ENCODE measurements at regions of chr14 and their contacts with region 1.

Region 1: DNA sequence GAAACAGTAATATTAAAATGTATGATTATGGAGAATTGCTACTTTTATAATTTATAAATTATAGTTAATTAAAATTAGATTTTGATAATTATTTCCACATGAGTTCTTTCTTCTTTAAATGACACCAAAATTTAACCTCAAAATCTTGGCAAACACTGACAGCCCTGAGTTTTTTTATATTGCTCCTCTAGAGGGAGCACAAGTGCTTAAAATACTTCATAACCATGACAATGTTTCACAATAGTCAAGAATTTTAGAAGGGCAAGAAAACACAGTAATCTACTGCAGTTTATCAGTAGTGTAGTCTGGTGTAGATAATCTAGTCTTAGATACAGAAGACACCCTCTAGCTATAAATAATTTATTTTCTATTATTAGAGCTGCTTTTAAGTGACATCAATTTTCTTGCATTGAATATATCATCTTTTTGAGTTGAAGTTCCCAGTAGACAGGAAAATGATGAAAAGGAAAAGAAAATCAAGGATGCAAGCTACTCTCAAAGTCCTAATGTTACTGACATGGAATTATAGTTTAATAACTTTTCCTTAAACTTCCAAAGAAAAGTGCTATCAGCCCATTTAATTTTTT is 14.3 kb upstream of the PTGER2 start:
- DNase-seq: peak; percentile 47
- H3K4me3 ChIP-seq: no peak overlapping the region
- H3K27ac ChIP-seq: no peak overlapping the region
- H3K4me1 ChIP-seq: no peaks in the 10 kb centered on the region
- H3K27me3 ChIP-seq: peaks cover 8 to 17% of the 10 kb centered on the region in 2 experiments
- CTCF ChIP-seq: peak; percentile 33 to 35
- POLR2A ChIP-seq: no peak

Region 2: GRCh38 chr14:52473557-52473956 is 173.8 kb after region 1 on chr14:
- CTCF ChIA-PET with region 1: interaction called, 4 read pairs
- POLR2A ChIA-PET with region 1: no interaction called
- dilution Hi-C with region 1: no loop called
- intact Hi-C with region 1: loop called (anchors 1 kb)
- DNase-seq: peak; percentile 43
- H3K4me3 ChIP-seq: no peak overlapping the region
- H3K27ac ChIP-seq: no peak overlapping the region
- H3K4me1 ChIP-seq: no peaks in the 10 kb centered on the region
- H3K27me3 ChIP-seq: no peaks in the 10 kb centered on the region
- CTCF ChIP-seq: no peak
- POLR2A ChIP-seq: no peak

Region 3: GRCh38 chr14:53055003-53055402 is 755.2 kb after region 1 on chr14:
- CTCF ChIA-PET with region 1: interaction called, 3 read pairs
- POLR2A ChIA-PET with region 1: no interaction called
- dilution Hi-C with region 1: no loop called
- intact Hi-C with region 1: loop called (anchors 2 kb)
- DNase-seq: peak; percentile 70
- H3K4me3 ChIP-seq: no peak overlapping the region
- H3K27ac ChIP-seq: no peak overlapping the region
- H3K4me1 ChIP-seq: peaks cover 3% of the 10 kb centered on the region
- H3K27me3 ChIP-seq: no peaks in the 10 kb centered on the region
- CTCF ChIP-seq: peak; percentile 46 to 50
- POLR2A ChIP-seq: no peak

Measured in endothelial cell of umbilical vein (primary cell).